ENCODE measurements at regions of chr1 and their contacts with region 1.

Region 1: GRCh38 chr1:150552093-150552691 is 3.0 kb downstream of the ADAMTSL4 start:
- DNase-seq: peak; percentile 95 to 96
- H3K4me3 ChIP-seq: no peak overlapping the region
- H3K27ac ChIP-seq: peak overlapping the region; percentile 92 to 97
- H3K4me1 ChIP-seq: peaks cover 3 to 66% (median 52%) of the 10 kb centered on the region in 4 donors
- H3K27me3 ChIP-seq: no peaks in the 10 kb centered on the region
- CTCF ChIP-seq: no peak

Region 2: GRCh38 chr1:150649441-150650075 is 97.4 kb after region 1 on chr1:
- intact Hi-C with region 1: no loop called
- DNase-seq: no peak
- H3K4me3 ChIP-seq: no peak overlapping the region
- H3K27ac ChIP-seq: no peak overlapping the region
- H3K4me1 ChIP-seq: no peaks in the 10 kb centered on the region
- H3K27me3 ChIP-seq: no peaks in the 10 kb centered on the region
- CTCF ChIP-seq: no peak

Region 3: DNA sequence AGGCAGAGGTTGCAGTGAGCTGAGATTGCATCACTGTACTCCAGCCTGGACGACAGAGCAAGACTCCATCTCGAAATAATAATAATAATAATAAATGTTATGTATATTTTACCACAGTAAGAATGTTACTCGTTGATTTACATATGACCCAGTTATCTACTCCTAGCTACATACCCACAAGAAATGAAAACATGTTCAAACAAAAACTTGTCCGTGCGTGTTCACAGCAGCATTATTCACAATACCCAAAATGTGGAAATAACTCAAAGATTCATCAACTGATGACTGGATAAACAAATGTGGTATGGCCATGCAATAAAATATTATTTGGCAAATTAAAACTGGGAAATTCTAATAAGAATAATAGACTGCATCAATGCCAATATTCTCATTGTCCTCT is 109.0 kb after region 1 on chr1:
- intact Hi-C with region 1: no loop called
- DNase-seq: no peak
- H3K4me3 ChIP-seq: no peak overlapping the region
- H3K27ac ChIP-seq: no peak overlapping the region
- H3K4me1 ChIP-seq: no peaks in the 10 kb centered on the region
- H3K27me3 ChIP-seq: no peaks in the 10 kb centered on the region
- CTCF ChIP-seq: no peak

Region 4: DNA sequence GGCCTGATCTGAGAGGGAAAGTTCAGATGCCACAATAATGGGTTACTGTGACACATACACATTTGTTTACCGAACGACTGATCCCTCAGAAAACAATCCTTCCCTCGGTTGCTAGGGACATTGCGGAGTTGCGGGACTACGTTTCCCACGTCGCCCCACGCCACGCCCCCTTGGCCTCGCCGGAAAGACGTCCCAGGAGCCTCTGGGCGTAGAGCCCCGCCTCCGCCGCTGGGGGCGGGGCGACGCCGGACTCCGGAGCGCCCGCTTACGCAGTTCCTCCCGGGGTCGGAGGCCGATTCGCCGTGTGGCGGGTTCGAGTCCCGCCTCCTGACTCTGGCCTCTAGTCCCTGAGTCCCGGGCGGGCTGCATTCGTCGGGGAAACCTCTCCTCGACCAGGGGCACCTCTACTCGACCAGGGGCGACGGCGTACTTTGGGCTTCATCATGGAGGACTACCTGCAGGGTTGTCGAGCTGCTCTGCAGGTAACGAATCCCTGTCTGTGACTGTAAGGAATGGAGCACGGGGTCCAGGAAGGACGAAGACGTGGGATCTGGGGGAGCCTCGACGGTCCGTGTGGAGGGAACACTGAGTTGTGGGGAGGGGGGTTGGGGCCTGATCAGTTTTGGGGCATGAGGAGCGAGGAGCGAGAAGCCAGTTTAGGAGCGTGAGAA is 456.1 kb after region 1 on chr1 and contains the start of gene PRUNE1:
- intact Hi-C with region 1: loop called (anchors 10 kb)
- DNase-seq: peak; percentile 94 to 98
- H3K4me3 ChIP-seq: peak within 1 kb of the TSS; percentile 70 to 89
- H3K27ac ChIP-seq: peak within 1 kb of the TSS; percentile 85 to 89
- H3K4me1 ChIP-seq: peaks cover 0 to 61% (median 53%) of the 10 kb centered on the region in 4 donors
- H3K27me3 ChIP-seq: no peaks in the 10 kb centered on the region
- CTCF ChIP-seq: peak in 1 of 2 experiments; percentile 17

Measured in tibial artery (tissue), 4 donors.